ENCODE measurements at regions of chr17 and their contacts with region 1.

Region 1: GRCh38 chr17:82153745-82154375 is 55.8 kb upstream of the FASN start:
- DNase-seq: peak; percentile 70 to 87 (median 81)
- H3K4me3 ChIP-seq: no peak overlapping the region
- H3K27ac ChIP-seq: no peak overlapping the region
- H3K4me1 ChIP-seq: no peaks in the 10 kb centered on the region
- H3K27me3 ChIP-seq: no peaks in the 10 kb centered on the region
- CTCF ChIP-seq: peak; percentile 76 to 92 (median 91)
- EP300 ChIP-seq: no peak
- POLR2A ChIP-seq: peak; percentile 24

Region 2: GRCh38 chr17:82030470-82031302 is 123.2 kb before region 1 on chr17:
- intact Hi-C with region 1: loop called (anchors 2 to 5 kb)
- DNase-seq: peak; percentile 77 to 90 (median 85)
- H3K4me3 ChIP-seq: peak overlapping the region; percentile 45
- H3K27ac ChIP-seq: peak overlapping the region in 1 of 2 donors; percentile 23
- H3K4me1 ChIP-seq: peaks cover 3% of the 10 kb centered on the region
- H3K27me3 ChIP-seq: no peaks in the 10 kb centered on the region
- CTCF ChIP-seq: peak; percentile 86 to 97 (median 96)
- EP300 ChIP-seq: no peak
- POLR2A ChIP-seq: no peak

Region 3: GRCh38 chr17:82212331-82213250 is 58.7 kb after region 1 on chr17 and contains the start of gene CCDC57:
- intact Hi-C with region 1: no loop called
- DNase-seq: peak; percentile 78 to 88 (median 84)
- H3K4me3 ChIP-seq: peak within 1 kb of the TSS; percentile 60
- H3K27ac ChIP-seq: peak within 1 kb of the TSS; percentile 85 to 94
- H3K4me1 ChIP-seq: peaks cover 2% of the 10 kb centered on the region
- H3K27me3 ChIP-seq: no peaks in the 10 kb centered on the region
- CTCF ChIP-seq: peak in 2 of 3 donors; percentile 44 to 55
- EP300 ChIP-seq: no peak
- POLR2A ChIP-seq: peak; percentile 9
- total RNA-seq, gene CCDC57: 22.9 to 65.0 (median 41.9) TPM

Measured in ovary (tissue), 10 donors.